Activated CD4-positive, alpha-beta T cell treated with anti-CD3 and anti-CD28 coated beads, Interleukin-2, amount 10 ng/mL, durations not matched to agents 24 days and 14 days (primary cell): ENCODE measurements at regions of chr6 and their contacts with region 1.

Region 1: DNA sequence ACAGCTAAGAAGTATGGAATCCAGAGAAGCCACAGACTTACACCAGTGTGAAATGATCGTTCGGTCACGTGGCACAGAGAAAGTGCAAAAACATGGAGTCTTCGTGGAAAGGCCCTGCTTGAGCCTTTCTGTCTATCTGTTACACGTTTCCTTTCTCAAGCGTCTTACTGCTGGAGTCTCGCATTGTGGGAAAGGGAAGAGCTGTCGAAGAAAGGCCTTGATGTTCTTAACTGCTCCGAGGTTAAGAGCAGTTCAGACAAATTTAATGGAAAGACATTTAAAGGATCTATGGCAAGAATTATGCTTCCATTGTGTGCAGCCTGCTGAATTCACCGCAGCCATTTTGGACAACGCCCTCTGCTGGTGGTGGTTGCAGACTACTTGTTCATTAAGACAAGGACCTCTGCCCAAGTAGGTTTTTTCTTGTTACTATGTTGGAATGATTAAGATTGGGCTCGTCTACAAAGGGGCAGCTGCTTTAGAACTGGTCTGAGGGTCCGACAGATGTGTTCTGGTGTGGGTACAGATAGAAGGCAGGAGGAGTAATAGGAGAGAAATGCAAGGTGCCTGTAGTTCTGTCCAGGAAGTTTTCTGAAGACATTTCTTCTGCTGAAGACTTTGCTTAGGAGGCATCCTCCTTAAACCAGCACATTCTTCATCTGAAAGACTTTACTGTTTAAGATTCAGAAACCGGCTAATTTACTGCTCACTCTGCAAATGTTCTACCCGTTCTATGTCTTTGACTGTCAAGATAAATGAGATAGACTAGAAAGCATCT is 24.7 kb upstream of the CCN6 start:
- DNase-seq: peak; percentile 86
- H3K4me3 Mint-ChIP-seq: peak overlapping the region; percentile 0
- H3K27ac Mint-ChIP-seq: peak overlapping the region; percentile 93
- H3K4me1 Mint-ChIP-seq: peaks cover 56% of the 10 kb centered on the region
- H3K27me3 Mint-ChIP-seq: no peaks in the 10 kb centered on the region

Region 2: DNA sequence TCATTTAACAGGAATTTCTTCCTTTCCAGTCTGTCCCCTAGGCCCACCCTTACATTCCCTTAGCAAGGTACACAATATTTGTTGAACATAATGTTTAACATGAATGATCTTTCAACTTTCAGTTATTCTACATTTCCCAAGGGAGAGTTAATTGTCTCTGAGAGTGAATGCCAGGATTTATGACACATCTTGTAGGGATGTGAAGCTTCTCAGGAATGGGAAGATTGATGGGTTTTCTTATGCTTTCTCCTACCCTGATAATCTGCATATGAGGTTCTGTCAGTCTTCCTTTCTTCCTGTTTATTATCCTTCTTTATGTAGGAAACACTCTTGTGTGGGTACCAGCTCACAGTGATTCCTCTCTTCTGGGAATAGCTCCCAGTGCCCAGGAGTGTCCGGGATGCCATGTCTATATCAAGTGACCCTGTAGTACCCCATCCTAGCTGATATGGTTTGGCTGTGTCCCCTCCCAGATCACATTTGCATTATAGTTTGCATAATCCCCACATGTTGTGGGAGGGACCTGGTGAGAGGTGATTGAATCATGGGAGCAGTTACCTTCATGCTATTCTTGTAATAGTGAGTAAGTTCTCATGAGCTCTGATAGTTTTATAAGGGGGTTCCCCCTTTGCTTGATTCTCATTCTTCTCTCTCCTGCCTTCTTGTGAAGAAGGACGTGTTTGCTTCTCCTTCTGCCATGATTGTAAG is 148.9 kb before region 1 on chr6:
- intact Hi-C with region 1: no loop called
- DNase-seq: no peak
- H3K4me3 Mint-ChIP-seq: no peak overlapping the region
- H3K27ac Mint-ChIP-seq: no peak overlapping the region
- H3K4me1 Mint-ChIP-seq: no peaks in the 10 kb centered on the region
- H3K27me3 Mint-ChIP-seq: peaks cover 2% of the 10 kb centered on the region

Region 3: DNA sequence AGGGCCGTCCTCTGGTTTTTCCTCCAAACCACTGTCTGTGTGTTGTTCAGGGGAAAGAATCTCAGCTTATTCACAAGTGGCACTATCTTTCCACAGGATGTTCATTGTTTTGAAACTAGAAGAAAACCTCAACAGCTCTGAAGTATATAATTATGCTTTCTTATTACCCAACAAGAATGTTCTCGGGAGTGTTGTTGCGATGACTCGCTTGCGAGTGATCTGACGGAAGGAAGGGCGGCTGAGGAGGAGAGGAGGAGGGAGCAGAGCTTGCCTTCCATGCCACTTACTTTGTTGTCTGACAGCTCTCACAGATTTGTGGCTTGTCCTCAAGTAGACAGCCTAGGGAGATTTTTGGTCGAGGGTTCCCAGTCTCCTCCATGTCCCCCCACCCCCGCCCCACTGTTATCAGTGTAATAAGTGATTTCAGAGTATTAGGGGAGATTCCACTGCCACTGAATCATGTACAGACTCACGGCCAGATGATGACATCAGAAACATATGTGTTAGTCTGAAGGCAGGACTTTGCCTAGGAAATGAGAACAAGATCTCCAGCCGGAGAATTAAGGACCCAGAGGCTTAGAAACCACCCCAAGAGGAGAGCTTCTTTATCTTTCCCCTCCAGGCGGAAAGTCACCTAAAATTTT is 56.0 kb before region 1 on chr6:
- intact Hi-C with region 1: loop called (anchors 1 kb)
- DNase-seq: peak; percentile 86
- H3K4me3 Mint-ChIP-seq: peak overlapping the region; percentile 73
- H3K27ac Mint-ChIP-seq: peak overlapping the region; percentile 86
- H3K4me1 Mint-ChIP-seq: peaks cover 51% of the 10 kb centered on the region
- H3K27me3 Mint-ChIP-seq: peaks cover 7% of the 10 kb centered on the region

Region 4: GRCh38 chr6:112016320-112016719 is 12.9 kb before region 1 on chr6:
- intact Hi-C with region 1: loop called (anchors 1 kb)
- DNase-seq: peak; percentile 71
- H3K4me3 Mint-ChIP-seq: peak overlapping the region; percentile 33
- H3K27ac Mint-ChIP-seq: peak overlapping the region; percentile 90
- H3K4me1 Mint-ChIP-seq: peaks cover 52% of the 10 kb centered on the region
- H3K27me3 Mint-ChIP-seq: no peaks in the 10 kb centered on the region

Region 5: DNA sequence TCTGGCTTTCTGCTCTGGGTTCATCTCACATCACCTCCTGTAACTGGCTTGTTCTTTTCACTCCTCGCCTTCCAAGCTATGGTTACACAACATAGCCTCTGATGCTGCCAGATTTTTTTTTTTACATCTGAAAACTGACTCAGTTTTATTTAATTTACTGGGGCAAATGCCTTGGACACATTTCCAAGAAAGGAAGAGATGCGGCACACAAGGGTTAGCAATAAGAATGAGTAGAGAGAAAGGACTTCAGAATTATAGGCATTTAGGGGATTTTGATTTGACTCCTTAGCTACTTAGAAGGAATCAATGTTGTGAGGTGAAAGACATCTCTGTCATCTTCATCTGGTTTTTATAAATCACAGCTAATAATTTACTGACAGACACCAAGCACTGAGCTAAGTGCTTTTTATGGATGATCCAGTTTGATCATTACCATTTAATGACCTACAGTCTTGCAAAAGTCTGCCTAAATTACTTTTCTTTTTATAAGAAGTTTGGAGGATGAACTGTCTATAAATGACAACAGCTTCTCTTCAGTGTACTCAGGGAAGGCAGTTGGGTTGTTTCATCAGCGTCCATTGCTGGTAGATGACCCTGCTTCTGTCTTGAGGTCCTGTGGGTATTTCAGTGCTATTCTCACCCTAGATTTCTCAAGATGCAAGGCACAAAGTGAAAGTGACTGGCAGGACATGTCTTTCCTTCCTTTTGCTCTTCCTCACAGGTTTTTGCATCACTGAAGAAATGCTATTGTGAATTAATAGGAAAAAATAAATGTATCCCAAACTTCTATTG is 194.0 kb after region 1 on chr6:
- intact Hi-C with region 1: no loop called
- DNase-seq: no peak
- H3K4me3 Mint-ChIP-seq: no peak overlapping the region
- H3K27ac Mint-ChIP-seq: no peak overlapping the region
- H3K4me1 Mint-ChIP-seq: no peaks in the 10 kb centered on the region
- H3K27me3 Mint-ChIP-seq: peaks cover 45% of the 10 kb centered on the region

Region 6: GRCh38 chr6:112549749-112550148 is 520.5 kb after region 1 on chr6:
- intact Hi-C with region 1: no loop called
- DNase-seq: no peak
- H3K4me3 Mint-ChIP-seq: no peak overlapping the region
- H3K27ac Mint-ChIP-seq: no peak overlapping the region
- H3K4me1 Mint-ChIP-seq: no peaks in the 10 kb centered on the region
- H3K27me3 Mint-ChIP-seq: no peaks in the 10 kb centered on the region